Heart right ventricle (tissue), 16 donors: ENCODE measurements at regions of chr2 and their contacts with region 1.

Region 1: GRCh38 chr2:228180181-228181097 is 1.0 kb downstream of the SPHKAP start:
- DNase-seq: peak; percentile 39 to 41
- ATAC-seq: peak; percentile 49 to 81 (median 70)
- H3K4me3 ChIP-seq: peak overlapping the region; percentile 47 to 66 (median 55)
- H3K27ac ChIP-seq: peak overlapping the region; percentile 36 to 87 (median 80)
- H3K4me1 ChIP-seq: peaks cover 0 to under 1% (median 0%) of the 10 kb centered on the region in 9 donors
- H3K27me3 ChIP-seq: peaks cover 0 to 33% (median 11%) of the 10 kb centered on the region in 7 donors
- CTCF ChIP-seq: peak in 3 of 9 donors; percentile 22 to 23 (median 22)

Region 2: DNA sequence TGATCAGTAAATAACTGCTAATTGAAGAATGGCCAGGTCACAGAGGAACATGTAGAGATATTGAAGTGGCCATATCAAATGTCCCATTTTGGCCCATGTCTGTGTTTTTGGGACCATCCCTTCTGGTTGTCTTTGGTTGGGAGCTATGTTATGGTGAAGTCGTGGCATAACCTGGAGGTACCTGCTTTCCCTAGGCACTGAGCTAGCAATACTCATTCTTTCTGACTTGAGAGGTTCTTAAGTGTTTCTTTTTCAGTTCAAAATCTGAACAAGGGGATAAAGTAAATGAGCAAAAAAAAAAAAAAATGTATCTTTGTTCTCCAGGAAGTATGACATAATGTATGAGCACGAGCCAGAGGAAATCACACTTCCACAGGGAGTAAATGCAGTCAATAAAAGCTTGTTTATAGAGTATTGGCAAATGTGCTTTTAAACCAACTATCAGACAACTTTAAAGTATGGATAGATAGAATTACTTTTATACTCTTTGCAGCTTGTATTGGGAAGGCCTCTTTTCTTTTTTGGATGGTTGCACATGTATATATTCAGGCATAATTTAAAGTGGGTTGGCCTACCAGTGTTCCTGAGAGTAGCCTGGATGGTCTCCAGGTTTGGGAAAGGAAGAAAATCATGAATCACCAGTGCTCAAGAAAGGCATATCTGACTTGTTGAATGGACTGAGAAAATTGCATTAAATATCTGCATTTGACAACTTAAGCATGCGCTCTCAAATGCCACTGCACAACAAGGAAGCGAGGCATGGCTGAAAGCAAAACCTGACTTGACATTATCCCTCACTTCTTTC is 123.9 kb before region 1 on chr2:
- intact Hi-C with region 1: loop called in 1 of 10 experiments (anchors 5 kb)
- DNase-seq: no peak
- ATAC-seq: peak in 1 of 8 donors; percentile 33
- H3K4me3 ChIP-seq: no peak overlapping the region
- H3K27ac ChIP-seq: no peak overlapping the region
- H3K4me1 ChIP-seq: peaks cover 0 to 25% (median 5%) of the 10 kb centered on the region in 9 donors
- H3K27me3 ChIP-seq: no peaks in the 10 kb centered on the region
- CTCF ChIP-seq: no peak

Region 3: GRCh38 chr2:228329282-228329681 is 148.8 kb after region 1 on chr2:
- intact Hi-C with region 1: loop called in 1 of 10 experiments (anchors 10 kb)
- DNase-seq: peak; percentile 28 to 43
- ATAC-seq: peak; percentile 61 to 98 (median 91)
- H3K4me3 ChIP-seq: no peak overlapping the region
- H3K27ac ChIP-seq: peak overlapping the region in 8 of 10 donors; percentile 20 to 73 (median 62)
- H3K4me1 ChIP-seq: peaks cover 0 to 10% (median 0%) of the 10 kb centered on the region in 9 donors
- H3K27me3 ChIP-seq: no peaks in the 10 kb centered on the region
- CTCF ChIP-seq: no peak

Region 4: DNA sequence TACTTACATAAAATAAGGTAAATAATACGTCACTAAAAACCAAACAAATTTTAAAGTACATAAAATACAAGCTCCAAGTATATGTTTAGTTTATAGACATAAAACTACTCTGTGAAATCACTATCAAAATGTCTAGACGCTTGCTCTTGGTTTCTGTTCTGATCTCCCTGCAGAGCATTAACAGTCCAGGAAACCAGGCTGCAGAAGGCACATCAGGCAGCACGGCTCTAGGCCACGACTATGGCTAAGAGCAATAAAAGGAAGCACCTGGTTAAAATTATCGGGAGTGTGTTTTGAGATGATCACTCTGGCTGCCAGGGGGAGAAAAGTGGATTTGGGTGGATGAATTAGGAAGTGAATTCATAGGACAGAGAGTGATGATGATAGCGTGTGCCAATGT is 197.1 kb after region 1 on chr2:
- intact Hi-C with region 1: loop called in 1 of 10 experiments (anchors 2 kb)
- DNase-seq: no peak
- ATAC-seq: peak in 6 of 8 donors; percentile 15 to 63 (median 38)
- H3K4me3 ChIP-seq: no peak overlapping the region
- H3K27ac ChIP-seq: peak overlapping the region in 7 of 10 donors; percentile 42 to 81 (median 66)
- H3K4me1 ChIP-seq: peaks cover 0 to 23% (median 0%) of the 10 kb centered on the region in 9 donors
- H3K27me3 ChIP-seq: no peaks in the 10 kb centered on the region
- CTCF ChIP-seq: no peak

Region 5: GRCh38 chr2:228657807-228658402 is 477.5 kb after region 1 on chr2:
- intact Hi-C with region 1: loop called in 8 of 10 experiments (anchors 2 to 10 kb)
- DNase-seq: no peak
- ATAC-seq: peak in 4 of 8 donors; percentile 58 to 68 (median 64)
- H3K4me3 ChIP-seq: no peak overlapping the region
- H3K27ac ChIP-seq: no peak overlapping the region
- H3K4me1 ChIP-seq: peaks cover 0 to 4% (median 0%) of the 10 kb centered on the region in 9 donors
- H3K27me3 ChIP-seq: no peaks in the 10 kb centered on the region
- CTCF ChIP-seq: peak; percentile 11 to 62 (median 50)